ENCODE measurements at regions of chr3 and their contacts with region 1.

Region 1: GRCh38 chr3:33063651-33064051 is 33.3 kb downstream of the GLB1 start:
- DNase-seq: peak in 5 of 35 experiments; percentile 14 to 53 (median 44)
- ATAC-seq: peak; percentile 35 to 79 (median 68)
- H3K4me3 ChIP-seq: no peak overlapping the region
- H3K4me3 Mint-ChIP-seq: peak overlapping the region; percentile 1 to 62 (median 44)
- H3K27ac ChIP-seq: peak overlapping the region; percentile 79
- H3K27ac Mint-ChIP-seq: peak overlapping the region; percentile 84 to 90
- H3K4me1 ChIP-seq: peaks cover 38 to 60% of the 10 kb centered on the region in 2 experiments
- H3K4me1 Mint-ChIP-seq: peaks cover 57 to 80% (median 61%) of the 10 kb centered on the region in 3 donors
- H3K27me3 ChIP-seq: no peaks in the 10 kb centered on the region
- H3K27me3 Mint-ChIP-seq: no peaks in the 10 kb centered on the region

Region 2: GRCh38 chr3:32474201-32474600 is 589.5 kb before region 1 on chr3:
- CTCF ChIA-PET with region 1: interaction called in 1 of 2 experiments, 11 read pairs
- POLR2A ChIA-PET with region 1: no interaction called
- DNase-seq: no peak
- ATAC-seq: no peak
- H3K4me3 ChIP-seq: no peak overlapping the region
- H3K4me3 Mint-ChIP-seq: no peak overlapping the region
- H3K27ac ChIP-seq: no peak overlapping the region
- H3K27ac Mint-ChIP-seq: peak overlapping the region in 1 of 2 donors; percentile 22
- H3K4me1 ChIP-seq: peaks cover 0 to 10% of the 10 kb centered on the region in 2 experiments
- H3K4me1 Mint-ChIP-seq: peaks cover 33 to 57% (median 39%) of the 10 kb centered on the region in 3 donors
- H3K27me3 ChIP-seq: no peaks in the 10 kb centered on the region
- H3K27me3 Mint-ChIP-seq: no peaks in the 10 kb centered on the region

Region 3: DNA sequence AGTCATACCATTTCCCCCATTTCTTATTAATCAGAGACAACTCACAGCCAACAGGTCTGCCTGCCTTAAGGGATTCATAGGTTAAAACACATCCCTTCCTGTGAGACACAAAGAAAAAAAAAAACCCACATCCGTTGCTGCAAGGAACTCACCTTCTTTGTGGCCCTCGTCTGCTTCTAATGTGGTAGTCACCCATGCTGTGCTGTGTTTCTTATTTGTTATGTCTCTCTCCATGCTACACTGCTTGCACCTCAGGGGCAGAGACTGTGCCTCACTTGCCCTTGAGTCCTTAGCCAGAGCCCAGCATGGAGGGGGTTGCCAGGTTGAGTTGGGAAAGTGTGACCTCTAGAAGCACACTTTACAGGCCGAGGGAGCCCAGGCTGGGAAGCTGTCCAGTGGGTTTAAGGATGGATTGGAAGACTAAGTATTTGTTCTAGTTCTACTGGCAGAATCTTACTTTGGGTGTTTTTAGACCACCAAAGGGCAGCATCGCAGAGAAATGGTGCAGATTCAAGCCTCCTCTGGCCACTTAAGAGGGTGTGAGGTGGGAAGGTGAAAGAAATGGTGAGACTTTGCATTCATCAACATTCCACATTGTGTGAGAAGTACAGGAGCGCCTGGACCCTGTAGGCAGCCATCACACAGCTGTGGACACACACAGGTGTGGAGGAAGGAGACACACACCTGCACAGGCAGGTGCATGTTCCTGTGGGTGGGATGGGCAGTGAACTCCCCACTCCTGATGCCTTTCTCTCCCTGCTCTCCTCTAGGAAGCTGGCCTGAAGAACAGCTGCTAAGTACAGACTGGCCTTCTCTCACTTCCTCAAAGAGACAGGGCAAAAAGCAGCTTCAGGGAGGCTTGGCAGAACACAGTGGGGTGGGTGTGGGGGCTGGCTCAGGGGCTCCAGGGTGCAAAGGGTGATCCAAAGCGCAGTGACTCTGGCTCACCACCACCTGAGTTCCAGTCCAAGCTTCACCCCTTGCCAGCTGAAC is 15.5 kb before region 1 on chr3:
- CTCF ChIA-PET with region 1: interaction called, 7 to 13 read pairs
- POLR2A ChIA-PET with region 1: interaction called, 4 to 8 read pairs
- DNase-seq: peak in 34 of 35 experiments; percentile 17 to 83 (median 51)
- ATAC-seq: peak; percentile 87 to 91 (median 90)
- H3K4me3 ChIP-seq: peak overlapping the region in 1 of 2 donors; percentile 48
- H3K4me3 Mint-ChIP-seq: peak overlapping the region; percentile 66 to 76 (median 74)
- H3K27ac ChIP-seq: peak overlapping the region; percentile 54
- H3K27ac Mint-ChIP-seq: peak overlapping the region; percentile 98 to 99
- H3K4me1 ChIP-seq: peaks cover 51 to 61% of the 10 kb centered on the region in 2 experiments
- H3K4me1 Mint-ChIP-seq: peaks cover 70 to 80% (median 78%) of the 10 kb centered on the region in 3 donors
- H3K27me3 ChIP-seq: no peaks in the 10 kb centered on the region
- H3K27me3 Mint-ChIP-seq: no peaks in the 10 kb centered on the region

Region 4: GRCh38 chr3:33089515-33089914 is 25.9 kb after region 1 on chr3:
- CTCF ChIA-PET with region 1: no interaction called
- POLR2A ChIA-PET with region 1: no interaction called
- DNase-seq: peak in 1 of 35 experiments; percentile 40
- ATAC-seq: peak in 3 of 4 experiments; percentile 43 to 62 (median 54)
- H3K4me3 ChIP-seq: no peak overlapping the region
- H3K4me3 Mint-ChIP-seq: peak overlapping the region; percentile 11 to 47 (median 41)
- H3K27ac ChIP-seq: peak overlapping the region; percentile 28
- H3K27ac Mint-ChIP-seq: peak overlapping the region; percentile 56 to 79
- H3K4me1 ChIP-seq: peaks cover 6 to 9% of the 10 kb centered on the region in 2 experiments
- H3K4me1 Mint-ChIP-seq: peaks cover 69 to 89% (median 84%) of the 10 kb centered on the region in 3 donors
- H3K27me3 ChIP-seq: no peaks in the 10 kb centered on the region
- H3K27me3 Mint-ChIP-seq: no peaks in the 10 kb centered on the region

Region 5: DNA sequence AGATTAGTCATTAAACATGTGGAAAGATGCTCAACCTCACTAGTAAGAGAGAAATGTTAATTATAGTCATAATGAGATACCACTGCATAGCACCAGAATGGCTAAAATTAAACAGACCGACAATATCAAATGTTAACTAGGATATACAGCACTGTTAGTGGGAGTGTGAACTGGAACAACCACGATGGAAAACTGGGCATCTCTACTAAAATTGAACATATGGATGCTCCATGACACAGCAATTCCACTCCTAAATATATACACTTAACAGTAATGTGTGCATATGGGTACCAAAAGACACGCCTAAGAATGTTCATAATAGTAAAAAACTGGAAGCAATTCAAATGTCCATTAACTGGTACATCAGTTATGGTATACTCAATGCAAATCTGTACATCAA is 91.7 kb after region 1 on chr3:
- CTCF ChIA-PET with region 1: no interaction called
- POLR2A ChIA-PET with region 1: no interaction called
- DNase-seq: no peak
- ATAC-seq: no peak
- H3K4me3 ChIP-seq: no peak overlapping the region
- H3K4me3 Mint-ChIP-seq: no peak overlapping the region
- H3K27ac ChIP-seq: no peak overlapping the region
- H3K27ac Mint-ChIP-seq: no peak overlapping the region
- H3K4me1 ChIP-seq: no peaks in the 10 kb centered on the region
- H3K4me1 Mint-ChIP-seq: no peaks in the 10 kb centered on the region
- H3K27me3 ChIP-seq: peaks cover 0 to 34% of the 10 kb centered on the region in 2 experiments
- H3K27me3 Mint-ChIP-seq: peaks cover 42 to 48% of the 10 kb centered on the region in 2 donors

Measured in T-cell (primary cell).